ENCODE measurements at regions of chr6 and their contacts with region 1.

Region 1: DNA sequence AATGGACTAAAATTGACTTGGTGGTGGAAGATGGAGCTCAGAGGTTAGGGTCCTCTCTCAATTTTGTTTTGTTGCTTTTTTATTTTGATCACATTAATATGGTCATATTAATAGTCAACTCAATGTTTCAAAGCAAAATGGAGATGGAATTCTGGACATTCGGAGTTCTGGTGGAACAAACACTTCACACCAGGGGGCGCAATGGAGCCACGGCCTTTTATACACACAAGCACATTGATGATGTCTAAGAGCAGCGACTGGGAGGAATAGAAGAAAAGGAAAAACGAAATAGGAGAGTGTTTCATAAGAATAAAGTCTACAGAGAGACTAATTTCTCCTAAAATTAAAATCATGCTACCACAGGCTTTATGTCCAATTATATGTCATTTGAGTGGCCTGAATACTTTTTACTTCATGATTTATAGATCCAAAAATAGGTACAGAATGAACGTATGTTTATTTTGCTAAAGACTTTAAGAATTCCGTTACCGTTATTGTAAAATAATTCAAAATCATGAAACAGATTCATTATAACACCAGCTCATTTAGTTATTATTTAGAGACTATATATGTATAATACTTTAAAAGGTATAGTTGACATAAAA is 197.6 kb upstream of the SASH1 start:
- DNase-seq: peak in 1 of 2 experiments; percentile 35
- H3K4me3 ChIP-seq: no peak overlapping the region
- H3K27ac ChIP-seq: no peak overlapping the region
- H3K4me1 ChIP-seq: peaks cover 25% of the 10 kb centered on the region
- H3K27me3 ChIP-seq: no peaks in the 10 kb centered on the region
- CTCF ChIP-seq: peak; percentile 71

Region 2: DNA sequence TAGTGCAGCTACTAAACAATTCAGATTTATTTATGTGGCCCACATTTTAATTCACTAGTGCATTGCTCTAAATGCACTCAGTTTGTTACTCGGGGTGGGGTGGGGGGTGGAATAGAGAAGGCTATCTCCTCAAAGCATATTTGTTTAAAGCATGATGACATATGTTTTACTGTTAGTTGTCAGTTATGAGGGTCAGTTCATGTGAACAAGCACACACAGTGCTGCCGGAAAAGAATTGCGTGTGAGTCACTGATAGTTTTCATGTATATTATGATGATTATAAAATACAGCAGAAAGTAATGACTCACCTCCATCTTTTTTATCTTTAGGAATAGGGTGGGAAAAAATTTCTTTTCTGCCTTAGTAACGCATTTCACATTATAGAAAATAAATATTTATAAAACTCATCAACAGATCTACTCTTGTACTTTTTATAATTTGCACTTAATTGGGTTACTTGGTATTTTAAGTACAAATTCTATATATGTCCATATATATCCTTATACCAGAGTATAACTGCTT is 983.0 kb before region 1 on chr6:
- CTCF ChIA-PET with region 1: interaction called, 10 read pairs
- POLR2A ChIA-PET with region 1: no interaction called
- intact Hi-C with region 1: no loop called
- DNase-seq: no peak
- H3K4me3 ChIP-seq: no peak overlapping the region
- H3K27ac ChIP-seq: no peak overlapping the region
- H3K4me1 ChIP-seq: no peaks in the 10 kb centered on the region
- H3K27me3 ChIP-seq: no peaks in the 10 kb centered on the region
- CTCF ChIP-seq: no peak

Region 3: DNA sequence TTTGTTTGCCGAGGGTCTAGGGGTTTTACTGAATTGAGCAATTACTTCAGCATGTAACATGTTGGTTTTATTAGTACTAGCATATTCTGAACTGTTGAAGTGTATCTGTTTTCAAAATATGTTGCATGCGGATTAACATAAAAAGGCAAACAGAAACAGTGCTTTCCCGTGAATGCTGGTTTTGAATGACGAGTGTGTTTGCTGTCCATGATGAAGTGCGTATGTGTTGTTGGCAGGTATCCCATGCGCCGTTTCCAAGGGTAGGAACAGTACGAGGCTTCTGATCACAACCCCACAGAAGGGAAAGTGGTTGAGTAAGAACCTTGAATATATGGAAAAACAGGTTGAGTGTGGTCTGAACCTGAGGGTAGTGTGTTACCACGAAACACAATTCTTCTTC is 403.6 kb before region 1 on chr6:
- CTCF ChIA-PET with region 1: no interaction called
- POLR2A ChIA-PET with region 1: interaction called, 10 read pairs
- intact Hi-C with region 1: no loop called
- DNase-seq: no peak
- H3K4me3 ChIP-seq: no peak overlapping the region
- H3K27ac ChIP-seq: no peak overlapping the region
- H3K4me1 ChIP-seq: no peaks in the 10 kb centered on the region
- H3K27me3 ChIP-seq: no peaks in the 10 kb centered on the region
- CTCF ChIP-seq: no peak